ENCODE measurements at regions of chr4 and their contacts with region 1.

Region 1: GRCh38 chr4:36081185-36081584 is 163.1 kb downstream of the ARAP2 start:
- DNase-seq: peak; percentile 37
- H3K4me3 Mint-ChIP-seq: no peak overlapping the region
- H3K27ac Mint-ChIP-seq: no peak overlapping the region
- H3K4me1 Mint-ChIP-seq: peaks cover 7% of the 10 kb centered on the region
- H3K27me3 Mint-ChIP-seq: no peaks in the 10 kb centered on the region

Region 2: DNA sequence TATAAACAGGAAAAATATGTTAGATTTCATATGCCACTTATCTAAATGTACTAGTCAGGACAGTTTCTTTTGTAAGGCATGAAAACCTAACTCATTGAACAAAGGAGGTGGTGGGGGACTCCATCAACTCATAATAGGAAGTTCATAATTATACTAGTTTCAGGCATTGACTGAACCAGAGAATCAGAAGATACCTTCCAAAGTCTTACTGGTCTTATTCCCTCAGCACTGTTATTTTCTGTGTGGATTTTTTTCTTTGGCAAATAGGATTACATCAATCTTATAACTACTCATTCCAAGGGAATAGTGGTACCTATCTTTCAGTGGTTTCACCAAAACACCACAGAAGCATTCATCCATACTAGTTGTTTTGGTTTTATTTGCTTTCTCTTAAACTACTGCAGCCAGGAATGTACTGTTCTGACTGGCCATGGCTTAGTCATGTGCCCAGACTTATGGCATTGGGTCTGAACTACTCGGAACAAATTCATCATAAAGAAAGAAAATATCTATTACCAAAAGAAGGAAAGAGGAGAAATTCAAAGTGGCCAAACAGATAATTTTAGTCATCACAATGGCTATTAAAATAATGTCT is 110.7 kb before region 1 on chr4:
- CTCF ChIA-PET with region 1: no interaction called
- POLR2A ChIA-PET with region 1: interaction called, 3 read pairs
- intact Hi-C with region 1: loop called (anchors 1 kb)
- DNase-seq: peak; percentile 53
- H3K4me3 Mint-ChIP-seq: no peak overlapping the region
- H3K27ac Mint-ChIP-seq: no peak overlapping the region
- H3K4me1 Mint-ChIP-seq: peaks cover 11% of the 10 kb centered on the region
- H3K27me3 Mint-ChIP-seq: no peaks in the 10 kb centered on the region

Region 3: DNA sequence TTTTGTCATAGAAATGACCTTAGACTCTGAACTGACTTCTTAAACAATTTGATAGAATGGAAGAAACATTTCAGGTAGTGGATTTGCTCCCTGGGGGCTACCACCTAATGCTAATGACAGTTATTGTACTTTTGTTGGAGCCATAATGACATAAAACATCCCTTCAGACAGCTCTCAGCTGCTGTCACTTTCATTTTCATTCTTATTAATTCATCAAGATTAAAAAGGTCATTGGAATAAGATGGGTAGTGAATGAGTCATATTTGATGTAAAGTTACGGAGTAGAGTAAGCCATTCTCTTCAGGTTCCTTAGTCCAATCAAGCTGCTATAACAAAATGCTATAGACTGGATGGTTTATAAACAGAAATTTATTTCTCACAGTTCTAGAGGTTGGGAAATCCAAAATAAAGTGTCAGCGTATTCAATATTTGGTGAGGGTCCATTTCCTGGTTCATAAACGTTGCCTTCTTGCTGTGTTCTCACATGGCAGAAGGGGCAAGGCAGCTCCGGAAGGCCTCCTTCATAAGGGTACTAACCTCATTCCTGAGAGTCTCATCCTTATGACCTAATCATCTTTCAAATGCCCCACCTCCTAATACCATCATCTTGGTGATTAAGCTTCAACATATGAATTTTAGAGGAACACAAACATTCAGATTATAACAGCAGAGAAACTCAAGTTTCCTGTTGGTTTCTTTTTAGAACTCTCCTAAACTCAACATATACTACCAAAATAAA is 105.4 kb before region 1 on chr4:
- CTCF ChIA-PET with region 1: no interaction called
- POLR2A ChIA-PET with region 1: interaction called, 3 read pairs
- intact Hi-C with region 1: loop called (anchors 1 kb)
- DNase-seq: no peak
- H3K4me3 Mint-ChIP-seq: no peak overlapping the region
- H3K27ac Mint-ChIP-seq: no peak overlapping the region
- H3K4me1 Mint-ChIP-seq: peaks cover 14% of the 10 kb centered on the region
- H3K27me3 Mint-ChIP-seq: no peaks in the 10 kb centered on the region

Region 4: DNA sequence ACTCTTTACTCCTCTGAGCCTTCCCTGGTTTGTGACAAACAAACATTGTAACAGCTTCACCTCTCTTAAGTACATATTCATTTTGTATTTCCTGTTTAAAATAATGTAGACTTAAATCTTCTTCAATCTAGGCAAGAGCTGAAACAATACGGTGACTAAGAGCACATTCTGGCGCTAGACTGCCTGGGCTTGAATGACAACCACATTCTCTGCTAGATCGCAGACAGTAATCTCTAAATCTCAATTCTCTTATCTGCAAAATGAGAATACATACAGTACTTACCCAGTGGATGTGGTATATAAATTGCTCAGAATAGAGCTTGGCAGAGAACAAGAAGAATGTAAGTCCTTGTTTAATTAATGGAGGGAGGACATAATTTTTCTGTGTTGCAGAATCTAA is 18.3 kb after region 1 on chr4:
- CTCF ChIA-PET with region 1: no interaction called
- POLR2A ChIA-PET with region 1: no interaction called
- intact Hi-C with region 1: loop called (anchors 1 kb)
- DNase-seq: no peak
- H3K4me3 Mint-ChIP-seq: no peak overlapping the region
- H3K27ac Mint-ChIP-seq: no peak overlapping the region
- H3K4me1 Mint-ChIP-seq: no peaks in the 10 kb centered on the region
- H3K27me3 Mint-ChIP-seq: no peaks in the 10 kb centered on the region

Region 5: GRCh38 chr4:36208893-36209473 is 127.8 kb after region 1 on chr4:
- CTCF ChIA-PET with region 1: no interaction called
- POLR2A ChIA-PET with region 1: no interaction called
- intact Hi-C with region 1: loop called (anchors 2 kb)
- DNase-seq: peak; percentile 54
- H3K4me3 Mint-ChIP-seq: no peak overlapping the region
- H3K27ac Mint-ChIP-seq: peak overlapping the region; percentile 73
- H3K4me1 Mint-ChIP-seq: peaks cover 52% of the 10 kb centered on the region
- H3K27me3 Mint-ChIP-seq: no peaks in the 10 kb centered on the region

Region 6: GRCh38 chr4:36285784-36286480 is 204.7 kb after region 1 on chr4:
- CTCF ChIA-PET with region 1: no interaction called
- POLR2A ChIA-PET with region 1: no interaction called
- intact Hi-C with region 1: loop called (anchors 1 kb)
- DNase-seq: peak; percentile 75
- H3K4me3 Mint-ChIP-seq: peak overlapping the region; percentile 53
- H3K27ac Mint-ChIP-seq: peak overlapping the region; percentile 87
- H3K4me1 Mint-ChIP-seq: peaks cover 60% of the 10 kb centered on the region
- H3K27me3 Mint-ChIP-seq: no peaks in the 10 kb centered on the region

Region 7: DNA sequence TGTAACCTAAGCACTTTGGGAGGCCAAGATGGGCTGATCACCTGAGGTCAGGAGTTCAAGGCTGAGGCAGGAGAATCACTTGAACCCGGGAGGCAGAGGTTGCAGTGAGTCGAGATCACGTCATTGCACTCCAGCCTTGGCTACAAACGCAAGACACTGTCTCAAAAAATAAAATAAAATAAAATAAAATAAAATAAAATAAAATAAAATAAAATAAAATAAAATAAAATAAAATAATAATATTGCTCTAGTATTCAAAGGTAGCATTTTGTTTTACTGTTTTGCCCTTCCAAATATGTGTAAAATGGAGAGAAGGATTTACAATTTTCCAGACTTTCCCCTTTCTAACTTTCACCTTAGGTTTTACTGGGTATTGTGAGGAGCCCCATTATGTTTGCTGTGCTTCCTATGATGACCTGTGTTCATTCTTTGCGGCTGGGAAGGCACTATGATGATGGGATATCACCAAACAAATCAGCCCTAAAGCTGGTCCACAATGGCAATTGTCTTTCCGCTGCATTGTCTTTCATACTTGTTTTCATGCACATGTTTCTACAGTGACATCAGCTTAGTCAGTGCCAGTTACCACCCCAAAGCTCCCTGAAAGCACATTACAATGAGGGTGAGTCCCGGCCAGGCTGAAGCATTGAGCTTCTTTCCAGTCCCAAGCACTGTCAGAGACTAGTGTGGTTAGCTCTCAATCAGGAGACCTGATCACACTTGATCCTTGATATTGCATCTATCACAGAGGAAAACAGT is 251.0 kb after region 1 on chr4:
- CTCF ChIA-PET with region 1: no interaction called
- POLR2A ChIA-PET with region 1: no interaction called
- intact Hi-C with region 1: no loop called
- DNase-seq: peak; percentile 57
- H3K4me3 Mint-ChIP-seq: no peak overlapping the region
- H3K27ac Mint-ChIP-seq: peak overlapping the region; percentile 78
- H3K4me1 Mint-ChIP-seq: peaks cover 23% of the 10 kb centered on the region
- H3K27me3 Mint-ChIP-seq: no peaks in the 10 kb centered on the region

Region 8: GRCh38 chr4:36399762-36400353 is 318.7 kb after region 1 on chr4:
- CTCF ChIA-PET with region 1: no interaction called
- POLR2A ChIA-PET with region 1: no interaction called
- intact Hi-C with region 1: loop called (anchors 1 kb)
- DNase-seq: peak; percentile 61
- H3K4me3 Mint-ChIP-seq: no peak overlapping the region
- H3K27ac Mint-ChIP-seq: no peak overlapping the region
- H3K4me1 Mint-ChIP-seq: peaks cover 17% of the 10 kb centered on the region
- H3K27me3 Mint-ChIP-seq: no peaks in the 10 kb centered on the region

Measured in activated CD4-positive, alpha-beta memory T cell treated with anti-CD3 and anti-CD28 coated beads for 36 hours (primary cell).